ENCODE measurements at regions of chr10 and their contacts with region 1.

Region 1: DNA sequence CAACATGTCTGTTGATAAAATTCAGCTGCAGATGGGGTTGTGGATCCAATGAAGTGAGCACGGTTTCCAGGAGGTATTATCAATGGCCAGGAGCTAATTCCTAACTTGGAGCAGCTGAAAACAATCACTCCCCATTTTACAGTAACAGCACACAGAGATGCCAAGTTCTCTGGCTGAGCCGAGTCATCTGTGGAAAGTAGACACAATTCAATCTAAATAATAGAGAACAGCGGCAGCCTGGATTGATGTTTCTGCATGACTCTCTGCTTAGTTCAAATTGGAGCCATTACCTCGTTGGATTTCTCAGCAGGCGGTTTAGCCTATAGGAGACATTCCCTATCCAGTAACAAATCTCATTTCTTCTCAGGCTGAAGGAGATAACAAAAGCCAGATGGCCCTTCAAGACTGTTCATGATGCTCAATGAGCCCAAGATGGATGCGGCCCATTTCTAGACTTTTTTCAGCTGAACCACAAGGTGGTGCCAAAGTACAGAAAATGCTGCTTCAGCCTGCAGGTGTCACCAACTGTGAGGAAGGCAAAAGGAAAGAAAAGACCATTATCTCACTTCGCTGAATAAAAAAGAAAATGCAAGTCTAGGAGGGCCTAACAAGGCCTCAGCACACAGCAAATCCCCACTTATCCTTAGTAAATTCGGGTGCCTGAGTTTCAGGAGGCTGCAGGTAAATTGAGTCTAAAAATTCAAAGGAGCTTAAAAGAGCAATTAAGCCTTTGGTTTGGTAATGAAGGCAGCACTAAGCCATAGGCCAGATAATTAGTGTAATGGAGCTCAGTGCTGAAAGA is 83.7 kb downstream of the SLC16A9 start:
- DNase-seq: peak; percentile 23
- H3K4me3 ChIP-seq: no peak overlapping the region
- H3K27ac ChIP-seq: peak overlapping the region in 2 of 4 donors; percentile 12 to 47
- H3K4me1 ChIP-seq: peaks cover 0 to 7% (median 4%) of the 10 kb centered on the region in 4 donors
- H3K27me3 ChIP-seq: no peaks in the 10 kb centered on the region
- CTCF ChIP-seq: peak; percentile 77 to 94 (median 77)
- EP300 ChIP-seq: no peak
- POLR2A ChIP-seq: no peak

Region 2: GRCh38 chr10:58952747-58953466 is 673.0 kb before region 1 on chr10:
- in situ Hi-C with region 1: loop called in 2 of 4 experiments (anchors 25 kb)
- intact Hi-C with region 1: loop called (anchors 10 kb)
- DNase-seq: peak; percentile 36
- H3K4me3 ChIP-seq: no peak overlapping the region
- H3K27ac ChIP-seq: peak overlapping the region; percentile 11 to 61 (median 42)
- H3K4me1 ChIP-seq: peaks cover 0 to 4% (median 2%) of the 10 kb centered on the region in 4 donors
- H3K27me3 ChIP-seq: no peaks in the 10 kb centered on the region
- CTCF ChIP-seq: peak; percentile 65 to 80 (median 73)
- EP300 ChIP-seq: no peak
- POLR2A ChIP-seq: no peak

Region 3: GRCh38 chr10:59688921-59689351 is 63.0 kb after region 1 on chr10:
- in situ Hi-C with region 1: no loop called
- intact Hi-C with region 1: no loop called
- DNase-seq: peak; percentile 56
- H3K4me3 ChIP-seq: no peak overlapping the region
- H3K27ac ChIP-seq: peak overlapping the region; percentile 70 to 78 (median 74)
- H3K4me1 ChIP-seq: peaks cover 3 to 41% (median 7%) of the 10 kb centered on the region in 4 donors
- H3K27me3 ChIP-seq: no peaks in the 10 kb centered on the region
- CTCF ChIP-seq: no peak
- EP300 ChIP-seq: no peak
- POLR2A ChIP-seq: no peak

Region 4: GRCh38 chr10:59791601-59792000 is 165.7 kb after region 1 on chr10:
- in situ Hi-C with region 1: no loop called
- intact Hi-C with region 1: no loop called
- DNase-seq: no peak
- H3K4me3 ChIP-seq: no peak overlapping the region
- H3K27ac ChIP-seq: no peak overlapping the region
- H3K4me1 ChIP-seq: no peaks in the 10 kb centered on the region
- H3K27me3 ChIP-seq: no peaks in the 10 kb centered on the region
- CTCF ChIP-seq: no peak
- EP300 ChIP-seq: no peak
- POLR2A ChIP-seq: no peak

Region 5: DNA sequence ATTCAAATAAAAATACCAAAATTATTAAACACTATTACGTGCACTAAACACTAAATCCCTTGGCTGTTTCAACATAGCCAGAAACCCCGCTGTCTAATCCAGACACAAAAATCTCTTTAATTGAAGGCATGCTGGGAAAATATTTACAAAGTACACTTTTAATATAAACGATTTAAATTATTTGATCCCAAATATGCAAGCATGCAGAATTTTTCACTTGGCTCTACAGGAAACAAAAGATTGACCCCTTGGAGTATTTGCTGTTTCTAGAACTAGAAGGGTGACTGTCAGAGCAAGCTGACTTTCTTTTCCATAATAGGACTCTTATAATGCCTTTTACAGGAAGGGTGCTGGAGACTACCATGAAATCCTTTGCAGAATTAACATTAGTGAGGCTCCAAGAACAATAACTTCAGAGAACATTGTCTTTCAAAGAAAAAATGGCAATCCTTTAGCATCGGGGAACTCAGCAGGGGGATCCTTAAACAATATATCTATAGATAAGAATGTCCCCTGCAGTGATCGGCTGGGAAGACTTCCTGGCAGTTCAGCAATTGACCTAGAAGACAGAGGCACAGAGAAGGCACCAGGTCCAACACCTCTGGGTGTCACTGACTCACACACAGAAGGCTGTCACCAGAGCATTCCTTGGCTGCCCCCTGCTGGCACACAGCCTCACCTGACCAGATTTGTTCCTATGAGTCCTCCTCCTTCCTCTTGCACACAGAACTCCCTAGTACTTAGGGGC is 183.1 kb after region 1 on chr10:
- in situ Hi-C with region 1: loop called (anchors 5 to 10 kb)
- intact Hi-C with region 1: no loop called
- DNase-seq: peak; percentile 86
- H3K4me3 ChIP-seq: no peak overlapping the region
- H3K27ac ChIP-seq: peak overlapping the region in 1 of 4 donors; percentile 4
- H3K4me1 ChIP-seq: peaks cover 0 to 8% (median 0%) of the 10 kb centered on the region in 4 donors
- H3K27me3 ChIP-seq: no peaks in the 10 kb centered on the region
- CTCF ChIP-seq: peak; percentile 60 to 79 (median 71)
- EP300 ChIP-seq: no peak
- POLR2A ChIP-seq: no peak

Region 6: GRCh38 chr10:60032723-60033122 is 406.8 kb after region 1 on chr10:
- in situ Hi-C with region 1: loop called (anchors 10 to 25 kb)
- intact Hi-C with region 1: no loop called
- DNase-seq: peak; percentile 60
- H3K4me3 ChIP-seq: no peak overlapping the region
- H3K27ac ChIP-seq: no peak overlapping the region
- H3K4me1 ChIP-seq: peaks cover 0 to 22% (median 8%) of the 10 kb centered on the region in 4 donors
- H3K27me3 ChIP-seq: no peaks in the 10 kb centered on the region
- CTCF ChIP-seq: peak; percentile 21 to 65 (median 47)
- EP300 ChIP-seq: no peak
- POLR2A ChIP-seq: no peak

Region 7: GRCh38 chr10:60414805-60415585 is 789.1 kb after region 1 on chr10:
- in situ Hi-C with region 1: loop called in 1 of 4 experiments (anchors 25 kb)
- intact Hi-C with region 1: no loop called
- DNase-seq: no peak
- H3K4me3 ChIP-seq: no peak overlapping the region
- H3K27ac ChIP-seq: no peak overlapping the region
- H3K4me1 ChIP-seq: peaks cover 0 to 27% (median 11%) of the 10 kb centered on the region in 4 donors
- H3K27me3 ChIP-seq: no peaks in the 10 kb centered on the region
- CTCF ChIP-seq: no peak
- EP300 ChIP-seq: no peak
- POLR2A ChIP-seq: no peak